PC-9 (cell line): ENCODE measurements at regions of chr9 and their contacts with region 1.

Region 1: GRCh38 chr9:121286973-121287741 is 19.2 kb downstream of the GSN start:
- DNase-seq: peak; percentile 94 to 95
- H3K4me3 ChIP-seq: peak overlapping the region; percentile 35; the same call in 1 of the 2 replicates
- H3K27ac ChIP-seq: peak overlapping the region; percentile 96
- H3K4me1 ChIP-seq: peaks cover 61% of the 10 kb centered on the region
- H3K27me3 ChIP-seq: no peaks in the 10 kb centered on the region
- CTCF ChIP-seq: peak; percentile 46; the same call in 1 of the 2 replicates

Region 2: DNA sequence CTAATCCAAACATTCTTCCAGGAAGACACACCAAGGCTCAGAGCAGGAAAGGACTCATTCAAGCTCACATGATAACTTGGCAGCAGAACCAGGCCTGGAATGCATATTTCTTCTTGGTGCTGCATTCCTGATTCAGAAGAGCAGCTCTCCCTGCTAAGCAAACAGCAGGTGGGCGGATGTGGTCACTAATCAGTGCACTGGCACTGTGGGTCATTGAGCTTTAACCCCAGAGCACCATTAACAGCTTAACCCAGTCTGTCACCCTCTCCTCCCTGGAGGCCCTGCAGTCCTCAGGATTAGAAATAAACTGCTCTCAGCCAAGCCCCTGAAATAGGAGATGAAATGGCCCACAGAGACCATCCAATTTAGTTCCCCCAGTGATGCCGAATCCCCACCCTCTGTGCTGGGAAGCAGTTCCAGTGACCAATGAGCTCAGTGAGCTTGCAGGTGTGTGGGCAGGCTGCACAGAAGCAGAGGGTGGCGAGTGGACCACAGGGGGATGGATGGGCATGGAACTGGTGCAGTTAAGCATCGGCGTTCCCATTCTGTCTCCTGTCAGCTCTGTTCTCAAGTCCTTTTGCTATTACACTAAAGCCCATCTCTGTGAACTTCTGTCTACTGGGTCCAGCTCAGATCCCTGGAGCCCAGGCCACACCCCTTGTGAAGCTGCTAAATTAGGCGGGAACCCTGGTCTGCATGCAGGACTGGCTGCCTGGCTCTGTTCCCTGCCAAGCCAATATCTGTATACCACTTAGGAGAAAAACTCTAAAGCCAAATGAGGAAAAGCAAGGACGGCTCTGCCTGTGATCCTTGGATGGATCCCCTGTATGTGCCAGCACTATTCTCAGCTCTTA is 556.3 kb before region 1 on chr9:
- CTCF ChIA-PET with region 1: interaction called, 9 read pairs
- POLR2A ChIA-PET with region 1: no interaction called
- intact Hi-C with region 1: loop called (anchors 10 kb)
- DNase-seq: peak; percentile 92 to 100
- H3K4me3 ChIP-seq: no peak overlapping the region; the same call in 1 of the 2 replicates
- H3K27ac ChIP-seq: peak overlapping the region; percentile 87
- H3K4me1 ChIP-seq: peaks cover 73% of the 10 kb centered on the region
- H3K27me3 ChIP-seq: no peaks in the 10 kb centered on the region
- CTCF ChIP-seq: no peak

Region 3: DNA sequence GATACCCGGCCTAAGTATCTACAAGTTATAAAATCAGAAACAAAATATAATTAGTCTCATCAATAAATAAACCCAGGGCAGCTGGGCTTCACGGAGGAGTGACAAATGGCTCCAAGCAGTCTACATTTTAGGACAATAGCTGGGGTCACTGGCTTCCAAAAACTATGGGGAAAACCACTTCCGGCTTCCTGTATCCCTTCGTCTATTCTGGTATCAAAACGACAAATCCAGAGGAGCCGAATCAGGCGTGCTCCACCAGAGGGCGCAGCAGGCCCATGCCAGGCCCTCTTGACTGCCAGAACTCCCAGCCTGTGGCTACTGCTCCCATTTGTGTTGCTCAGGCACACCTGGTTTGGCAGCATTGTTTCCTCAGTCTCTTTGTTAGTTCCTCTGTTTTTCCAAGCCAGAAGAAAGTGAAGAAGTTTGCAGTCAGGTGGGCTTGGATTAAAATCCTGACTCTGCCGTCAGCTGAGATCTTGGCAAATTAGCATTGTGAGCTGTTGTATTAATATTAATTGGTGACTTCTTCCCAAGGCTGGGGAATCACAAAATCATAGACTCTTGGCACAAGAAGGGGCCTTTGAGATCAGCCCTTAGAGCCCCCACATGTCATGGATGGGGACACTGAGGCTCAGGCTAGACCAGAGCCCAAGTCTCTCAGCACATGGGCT is 73.9 kb before region 1 on chr9:
- CTCF ChIA-PET with region 1: interaction called, 3 read pairs
- POLR2A ChIA-PET with region 1: no interaction called
- intact Hi-C with region 1: loop called (anchors 1 kb)
- DNase-seq: peak; percentile 78 to 94
- H3K4me3 ChIP-seq: no peak overlapping the region
- H3K27ac ChIP-seq: no peak overlapping the region
- H3K4me1 ChIP-seq: peaks cover 5% of the 10 kb centered on the region; the same call in 1 of the 2 replicates
- H3K27me3 ChIP-seq: no peaks in the 10 kb centered on the region
- CTCF ChIP-seq: peak; percentile 95

Region 4: DNA sequence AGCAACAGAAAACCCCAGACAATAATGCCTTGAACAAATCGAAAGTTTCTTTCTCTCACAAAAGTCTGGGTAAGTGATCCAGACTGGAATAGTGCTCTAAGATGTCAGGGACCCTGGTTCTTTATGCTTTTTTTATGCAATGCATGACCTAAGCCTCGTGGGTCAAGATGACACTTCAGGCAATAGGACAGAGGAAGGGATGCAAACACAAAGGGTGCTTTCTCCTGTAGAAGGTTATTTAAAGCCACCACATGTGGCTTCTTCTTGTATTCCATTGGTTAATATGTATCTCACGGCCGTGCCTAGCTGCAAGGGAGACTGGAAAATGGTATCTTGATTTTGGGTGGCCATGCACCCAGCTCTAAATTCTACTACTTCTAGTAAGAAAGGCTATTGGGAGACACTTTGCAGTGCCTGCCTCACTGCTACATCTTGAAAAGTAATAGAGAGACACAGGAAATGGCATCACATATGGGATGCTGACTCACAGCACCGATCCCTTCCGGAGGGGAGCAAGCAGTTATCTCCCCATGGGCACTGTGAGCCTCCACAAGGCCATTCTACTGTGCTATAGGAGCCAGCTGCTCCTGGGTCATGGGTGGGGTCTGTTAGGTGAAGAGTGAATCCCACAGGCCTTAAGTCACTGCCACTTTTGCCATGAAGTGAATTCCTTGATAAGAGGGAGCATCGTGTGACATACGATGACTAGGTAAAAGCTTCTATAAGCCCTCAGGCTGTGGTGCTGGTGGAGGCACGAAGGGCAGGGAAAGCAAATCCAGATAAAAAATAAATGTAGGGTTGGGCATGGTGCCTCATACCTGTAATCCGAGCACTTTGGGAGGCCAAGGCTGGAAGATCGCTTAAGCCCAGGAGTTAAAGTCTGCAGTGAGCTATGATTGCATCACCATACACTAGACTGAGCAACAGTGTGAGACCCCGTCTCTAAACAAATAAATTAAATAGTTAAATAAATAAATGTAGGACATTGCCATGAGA is 53.0 kb before region 1 on chr9:
- CTCF ChIA-PET with region 1: no interaction called
- POLR2A ChIA-PET with region 1: interaction called, 4 read pairs
- intact Hi-C with region 1: loop called (anchors 2 kb)
- DNase-seq: peak; percentile 78 to 97
- H3K4me3 ChIP-seq: no peak overlapping the region
- H3K27ac ChIP-seq: peak overlapping the region; percentile 94
- H3K4me1 ChIP-seq: peaks cover 32% of the 10 kb centered on the region
- H3K27me3 ChIP-seq: no peaks in the 10 kb centered on the region
- CTCF ChIP-seq: no peak

Region 5: GRCh38 chr9:121322037-121322775 is 35.0 kb after region 1 on chr9:
- CTCF ChIA-PET with region 1: interaction called, 8 read pairs
- POLR2A ChIA-PET with region 1: no interaction called
- intact Hi-C with region 1: loop called (anchors 1 kb)
- DNase-seq: peak in 1 of 2 experiments; percentile 95
- H3K4me3 ChIP-seq: no peak overlapping the region
- H3K27ac ChIP-seq: peak overlapping the region; percentile 30
- H3K4me1 ChIP-seq: peaks cover 15% of the 10 kb centered on the region
- H3K27me3 ChIP-seq: no peaks in the 10 kb centered on the region
- CTCF ChIP-seq: no peak

Region 6: GRCh38 chr9:121478816-121479676 is 191.9 kb after region 1 on chr9:
- CTCF ChIA-PET with region 1: no interaction called
- POLR2A ChIA-PET with region 1: no interaction called
- intact Hi-C with region 1: loop called (anchors 10 kb)
- DNase-seq: no peak
- H3K4me3 ChIP-seq: no peak overlapping the region
- H3K27ac ChIP-seq: no peak overlapping the region
- H3K4me1 ChIP-seq: no peaks in the 10 kb centered on the region
- H3K27me3 ChIP-seq: peaks cover 26% of the 10 kb centered on the region
- CTCF ChIP-seq: no peak